Transverse colon (tissue), 4 donors: ENCODE measurements at regions of chr2 and their contacts with region 1.

Region 1: DNA sequence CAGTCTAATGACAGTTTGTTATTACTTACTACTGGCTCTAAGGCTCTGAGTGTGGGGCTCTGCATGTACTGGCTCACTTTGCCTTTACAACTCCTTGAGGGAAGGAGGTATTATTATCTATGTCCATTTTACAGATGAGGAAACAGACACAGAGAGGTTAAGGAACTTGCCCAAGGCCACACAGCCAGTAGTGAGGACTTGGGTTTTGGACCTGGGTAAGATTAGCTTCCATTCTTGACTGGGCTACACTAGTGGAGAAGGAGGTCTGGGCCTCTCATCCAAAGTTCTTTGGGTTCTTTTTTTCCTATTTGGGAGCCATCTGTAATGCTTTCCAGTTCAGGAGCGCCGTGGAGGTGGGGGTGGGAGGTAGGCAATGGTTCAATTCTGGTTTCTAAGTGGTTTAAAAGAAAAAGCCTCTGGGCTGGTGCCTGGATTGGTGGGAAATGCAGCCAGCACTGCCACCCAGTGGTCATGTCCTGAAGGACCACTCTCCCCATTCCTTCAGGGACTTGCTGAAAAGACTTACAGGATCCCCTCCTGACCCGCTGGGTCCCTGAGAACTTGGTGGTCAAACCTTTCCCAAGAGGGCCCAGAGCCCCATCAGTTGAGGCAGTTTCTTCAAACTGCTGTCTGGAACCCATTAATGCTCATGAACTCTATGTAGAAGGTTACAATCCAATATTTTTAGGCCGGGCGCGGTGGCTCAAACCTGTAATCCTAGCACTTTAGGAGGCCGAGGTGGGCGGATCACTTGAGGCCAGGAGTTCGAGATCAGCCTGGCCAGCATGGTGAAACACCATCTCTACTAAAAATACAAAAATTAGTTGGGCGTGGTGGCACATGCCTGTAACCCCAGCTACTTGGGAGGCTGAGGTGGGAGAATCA is 38.6 kb upstream of the NOTO start:
- DNase-seq: peak; percentile 73
- H3K4me3 ChIP-seq: no peak overlapping the region
- H3K27ac ChIP-seq: no peak overlapping the region
- H3K4me1 ChIP-seq: no peaks in the 10 kb centered on the region
- H3K27me3 ChIP-seq: peaks cover 8% of the 10 kb centered on the region
- CTCF ChIP-seq: peak; percentile 82 to 87 (median 86)
- EP300 ChIP-seq: no peak
- POLR2A ChIP-seq: no peak

Region 2: GRCh38 chr2:72561621-72562318 is 602.0 kb before region 1 on chr2:
- in situ Hi-C with region 1: no loop called
- intact Hi-C with region 1: no loop called
- DNase-seq: no peak
- H3K4me3 ChIP-seq: no peak overlapping the region
- H3K27ac ChIP-seq: peak overlapping the region in 2 of 4 donors; percentile 1 to 25
- H3K4me1 ChIP-seq: peaks cover 0 to 10% (median 0%) of the 10 kb centered on the region in 4 donors
- H3K27me3 ChIP-seq: no peaks in the 10 kb centered on the region
- CTCF ChIP-seq: no peak
- EP300 ChIP-seq: no peak
- POLR2A ChIP-seq: no peak

Region 3: DNA sequence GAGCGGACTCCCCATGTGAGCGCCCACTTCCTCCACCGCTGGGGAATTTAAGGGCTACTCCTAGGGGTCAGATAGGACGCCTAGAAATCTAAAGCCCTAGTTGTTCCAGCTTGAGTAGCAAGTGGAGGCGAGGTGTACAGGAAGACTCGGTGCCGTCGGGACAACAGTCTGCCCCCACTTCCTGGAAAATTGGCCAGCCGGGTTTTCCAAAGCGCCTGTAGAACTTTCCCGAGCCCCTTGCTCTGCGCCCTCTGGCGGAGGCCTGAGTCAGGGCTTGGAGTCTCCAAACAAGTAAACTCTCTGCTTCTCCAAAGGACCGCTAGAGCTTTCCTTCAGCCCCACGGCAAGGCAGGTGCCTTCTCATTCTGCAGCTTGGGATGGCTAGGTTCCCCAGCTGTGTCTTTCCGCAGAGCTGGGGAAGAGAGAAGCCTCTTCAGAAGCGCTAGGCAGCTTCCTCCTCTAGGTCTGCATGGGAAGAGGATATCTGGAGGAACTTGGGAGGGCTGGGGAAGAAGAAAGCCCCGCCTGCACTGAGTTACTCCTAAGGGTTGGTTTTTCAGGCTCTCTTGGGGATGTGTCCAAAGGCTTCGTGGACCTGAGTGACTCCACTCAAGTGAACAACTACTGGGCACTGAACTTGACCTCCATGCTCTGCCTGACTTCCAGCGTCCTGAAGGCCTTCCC is 275.8 kb before region 1 on chr2:
- in situ Hi-C with region 1: loop called in 1 of 4 experiments (anchors 25 kb)
- intact Hi-C with region 1: no loop called
- DNase-seq: peak; percentile 93
- H3K4me3 ChIP-seq: peak overlapping the region; percentile 68 to 95 (median 72)
- H3K27ac ChIP-seq: peak overlapping the region; percentile 91 to 95 (median 92)
- H3K4me1 ChIP-seq: peaks cover 5 to 43% (median 27%) of the 10 kb centered on the region in 4 donors
- H3K27me3 ChIP-seq: peaks cover 11% of the 10 kb centered on the region
- CTCF ChIP-seq: peak; percentile 85 to 93 (median 91)
- EP300 ChIP-seq: no peak
- POLR2A ChIP-seq: no peak

Region 4: GRCh38 chr2:73085691-73086360 is 77.9 kb before region 1 on chr2:
- in situ Hi-C with region 1: loop called in 3 of 4 experiments (anchors 5 kb)
- intact Hi-C with region 1: no loop called
- DNase-seq: peak; percentile 88
- H3K4me3 ChIP-seq: no peak overlapping the region
- H3K27ac ChIP-seq: no peak overlapping the region
- H3K4me1 ChIP-seq: peaks cover 0 to 4% (median 4%) of the 10 kb centered on the region in 4 donors
- H3K27me3 ChIP-seq: no peaks in the 10 kb centered on the region
- CTCF ChIP-seq: peak; percentile 85 to 92 (median 90)
- EP300 ChIP-seq: no peak
- POLR2A ChIP-seq: no peak

Region 5: DNA sequence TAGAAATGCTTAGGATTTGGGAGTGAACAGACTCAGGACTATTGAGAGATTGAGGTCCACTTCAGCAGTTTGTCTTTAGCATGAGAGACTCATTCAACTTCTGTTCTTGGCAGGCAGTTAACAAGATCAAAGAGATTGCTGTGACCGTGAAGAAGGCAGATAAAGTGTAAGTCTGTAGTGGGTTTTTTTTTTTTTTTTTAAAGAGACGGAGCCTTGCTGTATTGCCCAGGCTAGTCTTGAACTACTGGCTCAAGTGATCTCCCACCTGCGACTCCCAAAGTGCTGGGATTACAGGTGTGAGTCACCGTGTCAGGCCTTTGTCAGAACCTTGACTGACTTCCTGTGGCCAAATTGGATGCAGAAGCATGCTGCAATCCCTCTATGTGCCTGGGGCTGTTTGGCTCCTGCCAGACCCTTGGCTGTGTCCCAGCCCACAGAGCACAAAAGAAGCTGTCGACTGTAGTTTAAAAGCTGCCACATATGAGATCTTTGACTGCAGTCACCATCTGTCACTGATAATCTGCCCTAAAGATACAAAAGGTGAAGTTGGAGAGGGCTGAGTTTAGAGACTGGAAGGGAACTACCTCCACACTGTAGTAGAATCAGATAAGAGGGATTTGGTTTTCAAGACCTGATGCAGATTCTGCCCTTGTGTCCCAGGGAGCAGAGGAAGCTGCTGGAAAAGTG is 80.3 kb after region 1 on chr2:
- in situ Hi-C with region 1: no loop called
- intact Hi-C with region 1: no loop called
- DNase-seq: no peak
- H3K4me3 ChIP-seq: no peak overlapping the region
- H3K27ac ChIP-seq: no peak overlapping the region
- H3K4me1 ChIP-seq: peaks cover 0 to 2% (median 0%) of the 10 kb centered on the region in 4 donors
- H3K27me3 ChIP-seq: no peaks in the 10 kb centered on the region
- CTCF ChIP-seq: no peak
- EP300 ChIP-seq: no peak
- POLR2A ChIP-seq: no peak

Region 6: GRCh38 chr2:73339201-73339600 is 175.5 kb after region 1 on chr2:
- in situ Hi-C with region 1: no loop called
- intact Hi-C with region 1: no loop called
- DNase-seq: no peak
- H3K4me3 ChIP-seq: no peak overlapping the region
- H3K27ac ChIP-seq: no peak overlapping the region
- H3K4me1 ChIP-seq: no peaks in the 10 kb centered on the region
- H3K27me3 ChIP-seq: no peaks in the 10 kb centered on the region
- CTCF ChIP-seq: no peak
- EP300 ChIP-seq: no peak
- POLR2A ChIP-seq: no peak